Right cardiac atrium (tissue), 5 donors: ENCODE measurements at regions of chr11 and their contacts with region 1.

Region 1: DNA sequence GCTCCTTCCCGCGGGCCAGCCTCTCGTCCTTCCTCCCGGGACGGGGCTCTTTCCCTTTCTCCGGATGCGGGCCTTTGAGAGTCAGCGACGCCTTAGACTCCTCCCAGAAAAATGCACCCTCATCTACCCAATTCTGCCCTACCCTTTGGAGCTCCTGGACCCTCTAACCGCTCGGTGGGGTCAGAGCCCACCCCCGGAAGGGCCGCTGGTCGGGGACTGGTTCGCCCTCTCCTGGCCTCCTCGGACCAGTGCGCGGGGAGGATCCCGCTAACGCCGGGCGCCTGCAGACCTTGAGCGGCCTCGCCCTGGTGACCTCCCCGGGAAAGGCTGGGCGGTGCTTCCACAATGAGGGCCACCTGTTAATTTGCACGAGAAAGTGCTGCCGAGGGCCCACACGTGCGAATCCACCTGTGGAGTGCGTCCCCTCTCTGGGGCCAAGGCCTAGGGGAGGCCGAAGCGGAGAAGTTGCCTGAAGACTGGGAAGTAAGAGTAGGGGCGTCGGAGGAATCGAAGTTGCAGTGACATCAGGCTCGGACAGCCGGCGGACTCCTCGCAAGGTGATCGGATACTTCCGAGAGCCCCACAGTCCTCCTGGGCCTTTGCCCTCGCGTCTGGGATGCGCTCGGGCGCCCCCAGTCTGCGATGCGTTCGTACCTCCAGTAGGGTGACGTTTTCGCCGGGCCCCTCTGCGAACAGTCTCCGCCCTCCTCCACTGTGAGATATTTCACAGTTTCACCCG is 61.5 kb downstream of the ENDOD1 start:
- DNase-seq: peak; percentile 90 to 96 (median 95)
- ATAC-seq: peak; percentile 85 to 93
- H3K4me3 ChIP-seq: peak overlapping the region; percentile 66
- H3K27ac ChIP-seq: peak overlapping the region; percentile 85
- H3K4me1 ChIP-seq: peaks cover 4% of the 10 kb centered on the region
- H3K27me3 ChIP-seq: no peaks in the 10 kb centered on the region

Region 2: GRCh38 chr11:94623120-94623735 is 527.9 kb before region 1 on chr11:
- intact Hi-C with region 1: loop called in 1 of 4 experiments (anchors 5 kb)
- DNase-seq: peak in 1 of 3 donors; percentile 42
- ATAC-seq: peak; percentile 89 to 94
- H3K4me3 ChIP-seq: no peak overlapping the region
- H3K27ac ChIP-seq: no peak overlapping the region
- H3K4me1 ChIP-seq: no peaks in the 10 kb centered on the region
- H3K27me3 ChIP-seq: no peaks in the 10 kb centered on the region

Region 3: DNA sequence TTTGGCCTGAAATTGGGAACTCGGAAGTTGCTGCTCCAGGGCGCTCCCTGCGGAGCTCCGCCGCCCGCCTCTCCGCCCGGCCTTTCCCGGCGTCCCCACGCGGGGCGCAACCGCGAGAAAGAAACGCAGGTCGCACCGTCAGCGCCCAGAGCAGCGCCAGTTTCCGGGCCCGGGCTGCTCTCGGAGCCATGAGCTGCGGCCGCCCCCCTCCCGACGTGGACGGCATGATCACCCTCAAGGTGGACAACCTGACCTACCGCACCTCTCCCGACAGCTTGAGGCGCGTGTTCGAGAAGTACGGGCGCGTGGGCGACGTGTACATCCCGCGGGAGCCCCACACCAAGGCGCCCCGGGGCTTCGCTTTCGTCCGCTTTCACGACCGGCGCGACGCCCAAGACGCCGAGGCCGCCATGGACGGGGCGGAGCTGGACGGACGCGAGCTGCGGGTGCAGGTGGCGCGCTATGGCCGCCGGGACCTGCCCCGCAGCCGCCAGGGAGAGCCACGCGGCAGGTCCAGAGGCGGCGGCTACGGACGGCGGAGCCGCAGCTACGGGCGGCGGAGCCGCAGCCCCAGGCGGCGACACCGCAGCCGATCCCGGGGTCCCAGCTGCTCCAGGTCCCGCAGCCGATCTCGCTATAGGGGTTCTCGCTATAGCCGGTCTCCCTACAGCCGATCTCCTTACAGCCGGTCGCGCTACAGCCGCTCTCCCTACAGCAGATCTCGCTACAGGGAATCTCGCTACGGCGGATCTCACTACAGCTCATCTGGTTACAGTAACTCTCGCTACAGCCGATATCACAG is 83.9 kb before region 1 on chr11:
- intact Hi-C with region 1: loop called in 2 of 4 experiments (anchors 2 to 5 kb)
- DNase-seq: peak; percentile 90 to 96 (median 95)
- ATAC-seq: peak; percentile 93 to 94
- H3K4me3 ChIP-seq: peak overlapping the region; percentile 82
- H3K27ac ChIP-seq: peak overlapping the region; percentile 97
- H3K4me1 ChIP-seq: no peaks in the 10 kb centered on the region
- H3K27me3 ChIP-seq: no peaks in the 10 kb centered on the region

Region 4: GRCh38 chr11:95089620-95090542 is 61.2 kb before region 1 on chr11 and contains the start of gene ENDOD1:
- intact Hi-C with region 1: loop called in 1 of 4 experiments (anchors 10 kb)
- DNase-seq: peak; percentile 86 to 95 (median 94)
- ATAC-seq: peak; percentile 98 to 99
- H3K4me3 ChIP-seq: peak within 1 kb of the TSS; percentile 52
- H3K27ac ChIP-seq: peak within 1 kb of the TSS; percentile 86
- H3K4me1 ChIP-seq: peaks cover 5% of the 10 kb centered on the region
- H3K27me3 ChIP-seq: no peaks in the 10 kb centered on the region
- total RNA-seq, gene ENDOD1: 12.0 to 19.5 (median 14.6) TPM

Region 5: GRCh38 chr11:95705485-95706124 is 554.5 kb after region 1 on chr11:
- intact Hi-C with region 1: loop called (anchors 1 to 5 kb)
- DNase-seq: peak; percentile 83 to 92 (median 91)
- ATAC-seq: peak; percentile 97 to 98
- H3K4me3 ChIP-seq: no peak overlapping the region
- H3K27ac ChIP-seq: no peak overlapping the region
- H3K4me1 ChIP-seq: peaks cover 2% of the 10 kb centered on the region
- H3K27me3 ChIP-seq: no peaks in the 10 kb centered on the region

Region 6: DNA sequence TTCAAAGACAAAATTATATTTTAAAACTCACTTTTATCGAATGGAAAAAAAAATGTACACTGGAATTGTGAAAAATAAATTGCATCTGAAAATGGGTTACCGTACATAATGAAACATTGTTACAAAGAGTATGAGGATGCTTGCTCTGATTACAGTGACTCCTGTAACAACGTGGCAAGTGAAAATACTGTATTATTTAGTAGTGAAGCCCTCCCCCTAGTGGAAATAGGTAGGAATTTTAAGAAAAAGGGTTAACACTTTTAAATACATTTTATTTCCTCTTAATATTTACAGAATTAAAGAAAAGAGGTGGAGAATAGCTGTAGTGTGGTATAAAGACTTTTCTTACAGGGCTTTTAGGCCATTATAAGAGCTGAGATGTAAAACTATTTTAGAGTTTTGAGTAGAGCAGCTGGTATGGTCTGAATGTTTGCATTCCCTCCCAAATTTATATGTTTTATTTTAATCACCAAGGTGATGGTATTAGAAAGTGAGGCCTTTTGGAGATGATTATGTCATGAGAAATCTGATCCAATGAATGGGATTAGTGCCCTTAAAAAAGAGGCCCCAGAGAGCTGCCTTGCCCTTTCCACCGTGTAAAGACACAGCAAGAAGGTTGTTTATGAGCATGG is 613.3 kb after region 1 on chr11:
- intact Hi-C with region 1: loop called (anchors 5 kb)
- DNase-seq: no peak
- ATAC-seq: peak; percentile 61 to 63
- H3K4me3 ChIP-seq: no peak overlapping the region
- H3K27ac ChIP-seq: no peak overlapping the region
- H3K4me1 ChIP-seq: no peaks in the 10 kb centered on the region
- H3K27me3 ChIP-seq: peaks cover 2% of the 10 kb centered on the region